Mammary epithelial cell (primary cell): ENCODE measurements at regions of chr12 and their contacts with region 1.

Region 1: DNA sequence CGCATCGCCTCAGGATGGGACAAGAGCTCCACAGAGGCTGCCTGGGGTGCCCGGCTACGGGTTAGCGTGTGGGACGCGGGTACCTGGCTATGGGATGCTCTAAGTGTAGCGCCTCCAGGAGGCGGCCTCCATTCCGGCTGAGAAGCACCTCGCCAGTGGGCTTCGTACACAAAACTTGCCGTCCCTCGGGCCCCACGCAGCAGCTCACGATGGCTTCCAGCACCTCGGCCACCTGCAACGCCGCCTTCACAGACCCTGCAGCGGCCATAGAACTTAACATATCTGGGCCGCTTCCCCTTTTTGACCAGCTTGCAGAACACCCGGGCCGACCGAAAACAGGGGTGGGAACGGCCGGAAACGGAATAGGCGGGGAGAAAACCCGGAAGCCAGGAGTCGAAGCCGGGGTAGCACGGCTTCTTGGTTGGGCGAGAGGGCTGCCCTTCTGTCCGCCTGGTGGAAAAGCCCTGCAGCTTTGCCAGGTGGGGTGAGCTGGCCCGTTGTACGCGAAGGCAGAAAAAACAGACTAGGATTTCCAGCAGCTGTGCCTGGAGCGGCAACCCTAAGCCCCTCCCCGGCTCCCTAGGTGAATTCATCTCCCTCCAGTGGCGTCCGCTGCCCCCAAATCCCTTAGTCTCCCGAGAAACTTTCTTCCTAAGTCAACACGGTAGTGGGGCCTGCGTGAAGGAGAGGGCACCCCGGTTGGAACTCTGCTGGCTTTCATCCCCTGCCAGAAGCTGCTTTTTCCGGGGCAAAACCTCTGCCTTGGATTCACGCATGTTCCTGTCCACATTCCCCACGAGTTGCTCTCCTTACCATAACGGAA is at the start of gene BBS10:
- DNase-seq: peak; percentile 92
- H3K4me3 ChIP-seq: peak within 1 kb of the TSS; percentile 85 to 93 (median 91)
- H3K27ac ChIP-seq: peak within 1 kb of the TSS; percentile 72
- H3K4me1 ChIP-seq: peaks cover 9% of the 10 kb centered on the region
- H3K27me3 ChIP-seq: no peaks in the 10 kb centered on the region
- CTCF ChIP-seq: peak; percentile 24 to 65
- total RNA-seq, gene BBS10: 7.6 to 10.7 TPM

Region 2: DNA sequence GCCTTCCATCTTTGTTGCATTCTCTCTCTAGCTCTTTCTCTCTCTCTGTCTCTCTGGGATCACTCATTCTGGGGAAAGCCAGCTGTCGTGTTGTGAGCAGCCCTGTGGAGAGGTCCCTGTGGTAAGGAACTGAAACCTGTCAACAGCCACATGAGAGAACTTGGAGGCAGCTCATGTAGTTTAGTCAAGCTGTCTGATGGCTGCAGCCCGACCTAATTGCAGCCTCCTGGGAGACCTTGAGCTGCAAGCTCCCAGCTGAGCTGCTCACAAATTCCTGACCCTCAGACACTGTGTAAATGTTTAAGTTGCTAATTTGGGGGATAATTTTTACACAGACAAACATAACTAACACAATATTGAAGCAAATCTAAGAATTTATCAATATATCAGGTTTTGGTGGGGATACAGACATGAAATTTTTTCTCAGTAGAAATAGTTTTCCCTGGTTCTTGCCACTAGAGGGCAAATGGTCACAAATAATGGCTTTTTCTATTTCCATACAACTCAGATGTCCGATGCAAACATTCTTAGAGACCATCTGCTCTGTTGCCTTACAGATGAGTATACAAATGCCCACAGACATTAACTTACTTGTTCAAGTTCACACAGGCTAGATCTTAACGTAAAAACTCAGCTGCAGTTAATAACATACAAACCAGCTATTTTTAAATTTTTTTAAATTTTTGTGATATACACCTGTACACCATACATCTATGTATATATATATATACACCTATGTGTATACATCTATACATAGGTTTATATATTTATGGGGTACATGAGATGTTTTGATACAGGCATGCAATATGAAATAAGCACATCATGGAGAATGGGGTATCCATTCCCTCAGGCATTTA is 821.4 kb before region 1 on chr12:
- CTCF ChIA-PET with region 1: interaction called, 6 read pairs
- dilution Hi-C with region 1: no loop called
- in situ Hi-C with region 1: loop called in 1 of 2 experiments (anchors 10 kb)
- intact Hi-C with region 1: loop called (anchors 2 kb)
- DNase-seq: peak; percentile 34
- H3K4me3 ChIP-seq: no peak overlapping the region
- H3K27ac ChIP-seq: no peak overlapping the region
- H3K4me1 ChIP-seq: no peaks in the 10 kb centered on the region
- H3K27me3 ChIP-seq: no peaks in the 10 kb centered on the region
- CTCF ChIP-seq: peak; percentile 47 to 69

Region 3: DNA sequence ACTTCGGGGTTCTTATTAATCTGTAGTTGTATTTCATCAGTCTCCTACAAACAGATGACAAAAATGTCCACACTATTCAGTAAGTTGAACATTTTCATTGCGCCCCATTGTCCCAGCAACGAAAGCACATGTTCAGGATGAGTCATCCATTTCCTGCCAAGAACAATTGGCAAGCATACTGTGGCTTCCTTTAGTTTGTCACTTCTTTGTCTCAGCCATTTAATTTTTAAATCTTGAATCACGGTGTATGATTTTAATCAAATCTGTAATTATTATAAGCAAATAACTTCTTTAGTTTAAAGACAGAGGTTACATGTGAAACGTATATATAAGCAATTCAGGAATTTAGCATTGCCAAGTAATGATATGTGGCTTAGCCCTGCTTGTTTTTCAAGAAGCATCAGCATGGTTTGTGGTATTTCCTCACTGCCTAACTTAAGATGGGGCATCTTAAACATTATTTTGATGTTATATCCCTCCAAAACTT is 625.5 kb before region 1 on chr12:
- CTCF ChIA-PET with region 1: no interaction called
- dilution Hi-C with region 1: no loop called
- in situ Hi-C with region 1: no loop called
- intact Hi-C with region 1: loop called (anchors 5 kb)
- DNase-seq: peak; percentile 85
- H3K4me3 ChIP-seq: no peak overlapping the region
- H3K27ac ChIP-seq: peak overlapping the region; percentile 88
- H3K4me1 ChIP-seq: peaks cover 59% of the 10 kb centered on the region
- H3K27me3 ChIP-seq: no peaks in the 10 kb centered on the region
- CTCF ChIP-seq: no peak

Region 4: GRCh38 chr12:76074701-76075336 is 273.5 kb before region 1 on chr12:
- CTCF ChIA-PET with region 1: no interaction called
- dilution Hi-C with region 1: no loop called
- in situ Hi-C with region 1: loop called (anchors 10 kb)
- intact Hi-C with region 1: no loop called
- DNase-seq: peak; percentile 8
- H3K4me3 ChIP-seq: no peak overlapping the region
- H3K27ac ChIP-seq: no peak overlapping the region
- H3K4me1 ChIP-seq: peaks cover 3% of the 10 kb centered on the region
- H3K27me3 ChIP-seq: no peaks in the 10 kb centered on the region
- CTCF ChIP-seq: no peak

Region 5: GRCh38 chr12:76259660-76260389 is 88.5 kb before region 1 on chr12:
- CTCF ChIA-PET with region 1: no interaction called
- dilution Hi-C with region 1: no loop called
- in situ Hi-C with region 1: no loop called
- intact Hi-C with region 1: loop called (anchors 2 kb)
- DNase-seq: peak; percentile 83
- H3K4me3 ChIP-seq: peak overlapping the region; percentile 20 to 43 (median 31)
- H3K27ac ChIP-seq: peak overlapping the region; percentile 68
- H3K4me1 ChIP-seq: peaks cover 26% of the 10 kb centered on the region
- H3K27me3 ChIP-seq: no peaks in the 10 kb centered on the region
- CTCF ChIP-seq: no peak

Region 6: GRCh38 chr12:76274420-76275083 is 73.7 kb before region 1 on chr12:
- CTCF ChIA-PET with region 1: no interaction called
- dilution Hi-C with region 1: no loop called
- in situ Hi-C with region 1: no loop called
- intact Hi-C with region 1: no loop called
- DNase-seq: peak; percentile 40
- H3K4me3 ChIP-seq: no peak overlapping the region
- H3K27ac ChIP-seq: no peak overlapping the region
- H3K4me1 ChIP-seq: peaks cover 37% of the 10 kb centered on the region
- H3K27me3 ChIP-seq: no peaks in the 10 kb centered on the region
- CTCF ChIP-seq: no peak

Region 7: DNA sequence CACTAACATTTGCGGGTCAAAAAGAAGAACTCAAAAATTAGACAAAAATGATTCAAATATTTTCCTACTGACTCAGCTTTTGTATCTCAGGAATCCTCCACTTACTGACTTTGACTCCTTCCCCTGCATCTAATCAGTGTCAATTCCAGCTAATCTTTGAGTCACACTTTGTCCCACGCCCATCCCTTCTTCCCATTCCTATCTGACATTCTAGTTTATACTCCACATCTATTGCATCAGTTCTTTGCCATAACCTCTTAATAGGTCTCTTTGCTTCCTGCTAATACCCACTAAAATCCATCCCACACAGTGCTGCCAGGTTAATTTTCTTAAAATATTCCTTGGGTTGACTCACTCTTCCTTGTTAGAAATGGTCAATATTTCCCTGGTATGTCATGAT is 19.1 kb before region 1 on chr12:
- CTCF ChIA-PET with region 1: no interaction called
- dilution Hi-C with region 1: no loop called
- in situ Hi-C with region 1: no loop called
- intact Hi-C with region 1: no loop called
- DNase-seq: peak; percentile 58
- H3K4me3 ChIP-seq: no peak overlapping the region
- H3K27ac ChIP-seq: no peak overlapping the region
- H3K4me1 ChIP-seq: peaks cover 13% of the 10 kb centered on the region
- H3K27me3 ChIP-seq: no peaks in the 10 kb centered on the region
- CTCF ChIP-seq: no peak